ENCODE measurements at regions of chr11 and their contacts with region 1.

Region 1: GRCh38 chr11:130827451-130828377 is 88.6 kb downstream of the SNX19 start:
- DNase-seq: no peak

Region 2: DNA sequence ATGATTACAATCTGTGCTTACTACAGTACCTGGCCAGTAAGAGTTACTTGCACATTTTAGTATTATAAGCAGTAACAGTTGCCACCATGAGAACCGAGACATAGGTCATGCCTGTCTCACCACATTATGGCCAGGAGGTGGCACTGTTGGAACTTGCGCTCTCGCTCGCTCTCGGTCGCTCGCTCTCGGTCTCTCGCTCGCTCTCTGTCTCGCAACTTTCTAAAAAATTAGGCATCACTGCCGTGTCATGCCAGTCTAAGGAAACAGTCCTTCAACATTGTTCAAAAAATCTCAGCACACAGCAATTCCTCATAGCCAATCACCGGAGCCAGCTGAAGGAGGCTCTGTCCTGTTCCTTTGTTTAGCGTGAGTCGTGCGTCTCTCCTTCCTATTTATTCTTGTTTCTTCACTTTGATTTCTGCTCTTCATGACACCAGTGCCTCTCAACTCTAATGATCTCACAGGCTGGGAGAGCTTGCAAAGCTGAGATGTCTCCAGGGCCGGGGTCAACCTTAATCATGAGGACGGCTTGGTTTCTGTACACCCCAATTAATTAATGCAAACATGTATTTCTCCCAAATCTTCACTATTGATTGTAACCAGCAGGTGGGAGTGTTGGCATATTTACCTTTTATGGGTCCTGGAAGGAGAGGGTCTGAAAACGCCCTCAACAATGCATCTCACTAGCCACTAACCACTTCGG is 393.0 kb before region 1 on chr11:
- intact Hi-C with region 1: loop called (anchors 1 kb)
- DNase-seq: peak; percentile 87

Region 3: GRCh38 chr11:130861902-130862860 is 34.5 kb after region 1 on chr11:
- intact Hi-C with region 1: loop called (anchors 5 kb)
- DNase-seq: peak; percentile 96

Region 4: GRCh38 chr11:131246663-131247062 is 418.9 kb after region 1 on chr11:
- intact Hi-C with region 1: no loop called
- DNase-seq: no peak